GM12878 (cell line): ENCODE measurements at regions of chr14 and their contacts with region 1.

Region 1: DNA sequence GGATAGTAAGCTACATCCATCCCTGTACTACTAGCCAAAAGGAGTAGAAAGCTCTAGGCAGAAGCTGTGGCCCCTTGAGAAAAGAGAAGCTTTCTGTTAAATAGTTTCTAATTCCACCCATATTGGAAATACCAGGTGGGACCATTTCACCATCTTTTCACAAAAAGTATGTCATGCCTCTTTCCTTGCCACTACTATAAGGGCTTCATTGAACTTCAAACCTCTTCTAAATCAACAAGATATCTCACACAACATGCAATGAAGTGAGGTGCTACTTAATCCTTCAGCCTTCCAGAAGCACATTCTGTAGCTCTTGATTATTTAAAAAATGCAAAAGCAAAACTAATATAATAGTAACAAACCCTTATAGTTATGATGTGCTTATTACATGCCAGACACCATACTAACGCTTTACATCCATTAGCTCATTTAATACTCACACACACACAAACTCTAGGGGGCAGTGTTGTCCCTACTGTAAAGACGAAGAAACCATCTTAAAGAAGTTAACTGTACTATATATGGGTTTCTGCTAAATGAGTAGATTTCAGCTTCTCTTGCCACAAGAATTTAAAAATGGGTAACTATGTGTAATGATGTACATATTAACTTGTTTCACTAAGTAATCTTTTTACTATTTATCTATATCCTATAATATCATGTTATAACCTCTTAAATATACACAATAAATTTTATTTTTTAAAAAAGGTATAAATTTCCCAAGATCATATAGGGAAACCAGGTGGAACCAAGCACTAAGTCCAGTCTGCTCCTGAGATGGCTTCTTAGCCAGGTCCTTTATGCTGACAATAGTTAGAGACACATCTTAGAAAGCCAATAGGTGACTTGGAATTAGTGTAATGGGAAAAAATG is 124.4 kb downstream of the RPS29 start:
- DNase-seq: peak; percentile 43
- ATAC-seq: peak; percentile 98
- H3K4me3 ChIP-seq: no peak overlapping the region
- H3K27ac ChIP-seq: no peak overlapping the region
- H3K4me1 ChIP-seq: no peaks in the 10 kb centered on the region
- H3K27me3 ChIP-seq: no peaks in the 10 kb centered on the region
- CTCF ChIP-seq: peak; percentile 64 to 80 (median 66)
- EP300 ChIP-seq: no peak
- POLR2A ChIP-seq: no peak
- RAD21 ChIP-seq: peak; percentile 84

Region 2: GRCh38 chr14:49483268-49483667 is 21.5 kb after region 1 on chr14:
- CTCF ChIA-PET with region 1: interaction called, 17 read pairs
- POLR2A ChIA-PET with region 1: no interaction called
- RAD21 ChIA-PET with region 1: interaction called, 4 read pairs
- SMC1A ChIA-PET with region 1: interaction called, 10 read pairs
- in situ Hi-C with region 1: no loop called
- intact Hi-C with region 1: no loop called
- DNase-seq: peak; percentile 13
- ATAC-seq: peak; percentile 45; the same call in 2 of the 3 replicates
- H3K4me3 ChIP-seq: no peak overlapping the region
- H3K27ac ChIP-seq: no peak overlapping the region
- H3K4me1 ChIP-seq: peaks cover 11% of the 10 kb centered on the region; the same call in 1 of the 2 replicates
- H3K27me3 ChIP-seq: no peaks in the 10 kb centered on the region
- CTCF ChIP-seq: no peak
- EP300 ChIP-seq: no peak
- POLR2A ChIP-seq: no peak
- RAD21 ChIP-seq: no peak

Region 3: GRCh38 chr14:49550286-49551184 is 88.8 kb after region 1 on chr14:
- CTCF ChIA-PET with region 1: interaction called, 29 read pairs
- POLR2A ChIA-PET with region 1: no interaction called
- RAD21 ChIA-PET with region 1: interaction called, 12 read pairs
- SMC1A ChIA-PET with region 1: interaction called, 4 read pairs
- in situ Hi-C with region 1: no loop called
- intact Hi-C with region 1: no loop called
- DNase-seq: no peak
- ATAC-seq: peak; percentile 28; the same call in 1 of the 3 replicates
- H3K4me3 ChIP-seq: no peak overlapping the region
- H3K27ac ChIP-seq: no peak overlapping the region
- H3K4me1 ChIP-seq: no peaks in the 10 kb centered on the region
- H3K27me3 ChIP-seq: no peaks in the 10 kb centered on the region
- CTCF ChIP-seq: peak in 2 of 3 experiments; percentile 2 to 33; a peak in 1 of 6 replicates
- EP300 ChIP-seq: no peak
- POLR2A ChIP-seq: no peak
- RAD21 ChIP-seq: 0 out of 2 replicates have a peak, but pooled peaks have one; percentile 24

Region 4: GRCh38 chr14:49620182-49621113 is 158.7 kb after region 1 on chr14 and contains the starts of genes MGAT2 and RPL36AL:
- CTCF ChIA-PET with region 1: interaction called, 12 read pairs
- POLR2A ChIA-PET with region 1: no interaction called
- RAD21 ChIA-PET with region 1: interaction called, 3 read pairs
- SMC1A ChIA-PET with region 1: no interaction called
- in situ Hi-C with region 1: no loop called
- intact Hi-C with region 1: no loop called
- DNase-seq: peak; percentile 97
- ATAC-seq: peak; percentile 92
- H3K4me3 ChIP-seq: peak within 1 kb of the TSS; percentile 92
- H3K27ac ChIP-seq: peak within 1 kb of the TSS; percentile 98
- H3K4me1 ChIP-seq: no peaks in the 10 kb centered on the region; the same call in 1 of the 2 replicates
- H3K27me3 ChIP-seq: no peaks in the 10 kb centered on the region
- CTCF ChIP-seq: peak; percentile 13 to 45 (median 21); a peak in 3 of 6 replicates
- EP300 ChIP-seq: no peak; a peak in 1 of 4 replicates
- POLR2A ChIP-seq: peak; percentile 99
- RAD21 ChIP-seq: no peak
- polyA plus RNA-seq, gene MGAT2: 0.03 TPM in 1 of 2 experiments, not detected in the other
- polyA plus RNA-seq, gene RPL36AL: 1,365 to 1,379 TPM

Region 5: GRCh38 chr14:49828640-49829039 is 366.9 kb after region 1 on chr14:
- CTCF ChIA-PET with region 1: interaction called, 21 read pairs
- POLR2A ChIA-PET with region 1: no interaction called
- RAD21 ChIA-PET with region 1: interaction called, 4 read pairs
- SMC1A ChIA-PET with region 1: interaction called, 10 read pairs
- in situ Hi-C with region 1: no loop called
- intact Hi-C with region 1: loop called (anchors 10 kb)
- DNase-seq: no peak
- ATAC-seq: no peak
- H3K4me3 ChIP-seq: no peak overlapping the region
- H3K27ac ChIP-seq: no peak overlapping the region
- H3K4me1 ChIP-seq: no peaks in the 10 kb centered on the region
- H3K27me3 ChIP-seq: no peaks in the 10 kb centered on the region
- CTCF ChIP-seq: no peak
- EP300 ChIP-seq: no peak
- POLR2A ChIP-seq: no peak
- RAD21 ChIP-seq: no peak